MCF 10A (cell line): ENCODE measurements at regions of chr10 and their contacts with region 1.

Region 1: DNA sequence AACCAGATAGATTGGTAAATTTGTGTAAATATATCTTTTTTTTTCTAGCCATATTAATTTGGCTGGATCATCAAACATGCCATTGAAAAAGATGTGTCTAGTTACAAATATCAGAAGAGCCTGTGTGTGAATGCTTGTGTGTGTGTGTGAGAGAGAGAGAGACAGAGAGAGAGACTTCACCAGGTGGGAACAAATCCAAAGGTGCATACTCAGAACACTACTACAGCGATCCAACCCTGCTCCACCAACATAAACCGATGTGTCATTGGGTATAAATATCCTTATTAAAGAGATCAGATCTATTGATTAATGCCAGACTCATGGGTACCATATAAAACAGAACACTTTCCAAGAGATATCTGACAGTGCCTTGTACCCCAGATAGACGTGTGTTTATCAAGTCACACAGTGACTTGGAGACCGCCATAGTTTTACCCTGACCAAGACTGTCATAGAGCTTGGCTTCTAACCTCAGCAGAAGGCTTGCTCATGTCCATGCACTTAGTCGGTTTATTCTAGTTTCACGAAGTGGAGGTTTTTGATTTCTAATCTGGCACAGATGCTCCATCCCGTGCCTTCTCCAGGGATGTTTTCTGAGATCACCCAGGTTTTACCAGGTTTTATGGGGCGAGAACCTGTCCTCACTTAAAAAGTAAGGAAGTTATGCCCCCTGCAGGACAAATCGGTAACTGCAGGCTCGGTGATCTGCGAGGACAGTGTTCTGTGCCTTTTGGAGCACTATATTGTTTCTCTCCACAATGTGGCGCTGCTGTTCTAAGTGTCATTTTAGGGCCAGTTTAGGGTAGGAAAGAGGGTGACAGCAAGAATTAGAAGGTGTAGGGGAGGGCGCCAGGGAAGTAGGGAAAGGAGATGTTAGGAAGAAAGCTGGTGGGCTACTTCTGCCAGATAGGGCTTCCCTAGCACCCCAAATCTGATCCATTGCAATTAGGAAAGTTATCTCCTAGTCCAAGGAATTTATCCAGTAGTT is 29.3 kb upstream of the WNT8B start:
- DNase-seq: peak; percentile 93
- H3K4me3 Mint-ChIP-seq: no peak overlapping the region
- H3K27ac Mint-ChIP-seq: no peak overlapping the region
- H3K4me1 Mint-ChIP-seq: peaks cover 6% of the 10 kb centered on the region
- H3K27me3 Mint-ChIP-seq: no peaks in the 10 kb centered on the region
- CTCF ChIP-seq: peak; percentile 96

Region 2: GRCh38 chr10:100327007-100327717 is 106.4 kb before region 1 on chr10:
- CTCF ChIA-PET with region 1: interaction called, 20 read pairs
- POLR2A ChIA-PET with region 1: no interaction called
- intact Hi-C with region 1: no loop called
- DNase-seq: no peak
- H3K4me3 Mint-ChIP-seq: no peak overlapping the region
- H3K27ac Mint-ChIP-seq: no peak overlapping the region
- H3K4me1 Mint-ChIP-seq: no peaks in the 10 kb centered on the region
- H3K27me3 Mint-ChIP-seq: peaks cover 81% of the 10 kb centered on the region
- CTCF ChIP-seq: no peak

Region 3: GRCh38 chr10:100346765-100347567 is 86.6 kb before region 1 on chr10 and contains the start of gene SCD:
- CTCF ChIA-PET with region 1: interaction called, 372 read pairs
- POLR2A ChIA-PET with region 1: interaction called, 33 read pairs
- intact Hi-C with region 1: loop called (anchors 1 kb)
- DNase-seq: peak; percentile 97
- H3K4me3 Mint-ChIP-seq: peak within 1 kb of the TSS; percentile 97
- H3K27ac Mint-ChIP-seq: peak within 1 kb of the TSS; percentile 83
- H3K4me1 Mint-ChIP-seq: peaks cover 53% of the 10 kb centered on the region
- H3K27me3 Mint-ChIP-seq: no peaks in the 10 kb centered on the region
- CTCF ChIP-seq: no peak
- total RNA-seq, gene SCD: 101 and 179 TPM in 2 replicates

Region 4: DNA sequence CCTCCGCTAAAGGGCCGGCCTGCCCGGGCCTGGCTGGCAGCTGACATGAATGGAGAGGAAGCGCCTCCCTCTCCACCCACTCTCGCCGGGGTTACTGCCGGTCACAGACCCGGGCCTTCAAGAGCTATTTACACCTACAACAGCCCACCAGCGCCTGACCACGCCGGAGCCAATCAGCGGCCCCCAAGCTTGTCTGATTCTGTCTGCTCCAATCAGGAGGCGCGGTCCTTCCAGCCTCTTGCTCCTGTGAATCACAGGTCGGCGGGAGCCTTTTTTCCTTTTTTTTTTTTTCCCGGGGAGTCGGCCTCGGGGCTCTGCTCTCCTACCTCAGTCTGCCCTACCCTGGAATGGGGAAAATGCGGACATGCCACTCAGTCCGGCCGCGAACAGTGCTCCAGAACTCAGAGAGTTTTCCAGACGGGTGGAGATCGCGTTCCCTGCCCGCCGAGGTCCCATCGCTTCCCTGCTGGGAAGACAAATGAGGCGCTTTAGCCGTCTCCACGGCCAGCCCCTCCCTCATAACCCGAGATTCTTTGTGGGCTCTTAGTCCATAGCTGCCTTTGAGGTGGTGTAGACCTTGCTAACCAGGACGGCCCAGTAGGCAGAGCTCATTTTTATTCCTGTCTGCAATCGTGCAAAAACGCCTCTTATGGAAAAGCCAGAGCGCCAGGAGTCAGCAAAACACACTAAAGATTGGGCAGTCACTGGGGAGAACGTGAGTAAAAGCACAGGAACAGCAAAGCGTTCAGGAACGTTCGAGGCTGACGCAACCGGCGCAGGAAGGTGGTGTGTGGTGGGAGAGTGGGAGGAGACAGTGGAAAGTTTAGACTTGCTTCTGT is 60.0 kb before region 1 on chr10:
- CTCF ChIA-PET with region 1: interaction called, 10 read pairs
- POLR2A ChIA-PET with region 1: interaction called, 17 read pairs
- intact Hi-C with region 1: loop called (anchors 1 kb)
- DNase-seq: peak; percentile 100
- H3K4me3 Mint-ChIP-seq: no peak overlapping the region
- H3K27ac Mint-ChIP-seq: no peak overlapping the region
- H3K4me1 Mint-ChIP-seq: peaks cover 14% of the 10 kb centered on the region
- H3K27me3 Mint-ChIP-seq: no peaks in the 10 kb centered on the region
- CTCF ChIP-seq: no peak

Region 5: DNA sequence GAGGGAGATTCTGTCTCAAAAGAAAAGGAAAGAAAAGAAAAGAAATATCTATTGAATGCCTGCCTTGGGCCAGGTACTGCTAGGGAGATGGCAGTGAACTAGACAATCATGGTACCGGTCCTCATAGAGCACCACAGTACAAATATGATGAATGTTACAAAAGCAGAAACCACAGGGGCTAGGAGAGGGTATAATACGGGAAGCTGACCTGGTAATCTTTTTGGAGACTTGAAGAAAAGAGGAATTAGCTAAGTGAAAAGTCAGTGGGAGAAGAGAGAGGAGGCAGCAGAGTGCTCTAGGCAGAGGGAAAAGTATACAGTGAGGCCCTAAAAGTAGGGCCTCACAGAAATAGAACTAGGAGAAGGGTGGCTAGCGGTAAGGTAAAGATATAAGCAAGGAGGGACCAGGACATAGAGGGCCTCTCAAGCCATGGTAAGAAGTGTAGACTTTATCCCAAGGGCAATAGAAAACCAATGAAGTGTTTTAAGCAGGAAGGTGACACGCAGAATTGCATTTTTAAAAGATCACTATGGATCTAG is 13.6 kb before region 1 on chr10:
- CTCF ChIA-PET with region 1: interaction called, 10 read pairs
- POLR2A ChIA-PET with region 1: no interaction called
- intact Hi-C with region 1: no loop called
- DNase-seq: no peak
- H3K4me3 Mint-ChIP-seq: no peak overlapping the region
- H3K27ac Mint-ChIP-seq: no peak overlapping the region
- H3K4me1 Mint-ChIP-seq: no peaks in the 10 kb centered on the region
- H3K27me3 Mint-ChIP-seq: no peaks in the 10 kb centered on the region
- CTCF ChIP-seq: no peak

Region 6: GRCh38 chr10:100518761-100519241 is 85.3 kb after region 1 on chr10:
- CTCF ChIA-PET with region 1: interaction called, 35 read pairs
- POLR2A ChIA-PET with region 1: no interaction called
- intact Hi-C with region 1: loop called (anchors 1 kb)
- DNase-seq: peak; percentile 72
- H3K4me3 Mint-ChIP-seq: no peak overlapping the region
- H3K27ac Mint-ChIP-seq: no peak overlapping the region
- H3K4me1 Mint-ChIP-seq: no peaks in the 10 kb centered on the region
- H3K27me3 Mint-ChIP-seq: no peaks in the 10 kb centered on the region
- CTCF ChIP-seq: peak; percentile 63

Region 7: GRCh38 chr10:100878291-100878910 is 444.9 kb after region 1 on chr10:
- CTCF ChIA-PET with region 1: interaction called, 40 read pairs
- POLR2A ChIA-PET with region 1: no interaction called
- intact Hi-C with region 1: loop called (anchors 1 kb)
- DNase-seq: peak; percentile 78
- H3K4me3 Mint-ChIP-seq: no peak overlapping the region
- H3K27ac Mint-ChIP-seq: no peak overlapping the region
- H3K4me1 Mint-ChIP-seq: peaks cover 7% of the 10 kb centered on the region
- H3K27me3 Mint-ChIP-seq: no peaks in the 10 kb centered on the region
- CTCF ChIP-seq: peak; percentile 73